Transverse colon (tissue), 4 donors: ENCODE measurements at regions of chr2 and their contacts with region 1.

Region 1: DNA sequence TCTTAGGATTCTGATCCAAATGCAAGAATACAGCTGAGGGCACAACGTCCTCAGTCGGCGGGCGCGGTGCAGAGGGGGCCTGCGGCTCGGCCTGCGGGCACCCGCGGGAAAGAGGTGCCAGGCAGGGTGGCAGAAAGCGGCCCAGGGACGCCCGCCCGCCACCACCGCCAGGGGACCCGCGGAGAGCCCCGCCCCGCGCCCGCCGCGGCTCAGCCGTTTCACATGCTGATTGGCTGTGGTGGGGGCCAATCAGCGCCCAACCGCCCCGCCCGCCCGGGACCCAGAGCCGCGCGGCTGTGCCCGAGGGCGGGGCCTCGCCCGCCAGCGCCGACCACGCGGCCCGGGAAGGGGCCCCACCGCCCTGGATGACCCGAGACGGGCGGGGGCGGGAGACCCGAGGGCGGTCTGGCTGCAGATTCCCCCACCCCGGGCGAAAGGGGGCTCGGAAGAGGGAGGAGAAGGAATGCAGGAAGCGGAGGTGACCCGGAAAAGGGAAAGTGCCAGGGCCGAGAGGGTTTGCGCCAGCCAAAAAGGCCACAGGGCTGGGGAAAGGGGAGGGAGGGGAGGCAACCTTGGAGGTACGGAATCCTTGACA is 8.0 kb downstream of the IRS1 start:
- DNase-seq: peak; percentile 93
- H3K4me3 ChIP-seq: peak overlapping the region; percentile 52 to 78 (median 70)
- H3K27ac ChIP-seq: peak overlapping the region; percentile 93 to 96 (median 94)
- H3K4me1 ChIP-seq: peaks cover 0 to 61% (median 23%) of the 10 kb centered on the region in 4 donors
- H3K27me3 ChIP-seq: no peaks in the 10 kb centered on the region
- CTCF ChIP-seq: peak; percentile 55 to 88 (median 58)
- EP300 ChIP-seq: no peak
- POLR2A ChIP-seq: peak; percentile 53

Region 2: DNA sequence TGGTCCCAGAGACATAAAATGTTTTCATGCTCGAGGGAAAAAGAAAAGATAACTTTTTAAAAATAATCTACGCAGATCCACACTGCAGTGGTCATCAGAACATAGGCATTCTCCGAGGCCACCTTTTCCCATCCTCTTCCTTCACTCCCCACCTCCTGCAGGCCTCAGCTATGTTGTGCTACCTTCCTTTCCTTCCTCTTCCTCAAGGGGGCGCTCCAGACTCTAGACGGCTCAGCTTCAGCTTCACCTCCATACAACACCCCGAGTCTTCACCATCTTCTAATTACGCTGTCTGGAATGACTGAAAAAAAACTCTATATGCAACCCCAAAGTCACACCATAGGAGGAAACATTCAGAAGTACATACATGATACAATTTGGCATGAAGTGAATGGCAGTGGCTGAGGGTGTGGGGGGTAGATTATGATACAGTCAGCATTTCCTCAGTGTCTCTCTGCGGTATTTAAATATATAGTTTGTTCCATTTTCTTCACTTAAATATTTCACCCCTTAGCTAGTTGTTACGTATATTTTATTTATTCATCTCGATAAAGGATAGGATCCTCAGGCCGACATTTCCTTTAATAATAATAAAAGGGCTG is 575.6 kb before region 1 on chr2:
- in situ Hi-C with region 1: no loop called
- intact Hi-C with region 1: loop called (anchors 10 kb)
- DNase-seq: peak; percentile 75
- H3K4me3 ChIP-seq: no peak overlapping the region
- H3K27ac ChIP-seq: no peak overlapping the region
- H3K4me1 ChIP-seq: peaks cover 0 to 8% (median 3%) of the 10 kb centered on the region in 4 donors
- H3K27me3 ChIP-seq: no peaks in the 10 kb centered on the region
- CTCF ChIP-seq: peak; percentile 63 to 69 (median 66)
- EP300 ChIP-seq: no peak
- POLR2A ChIP-seq: no peak

Region 3: GRCh38 chr2:226649871-226650660 is 141.5 kb before region 1 on chr2:
- in situ Hi-C with region 1: loop called in 1 of 4 experiments (anchors 25 kb)
- intact Hi-C with region 1: no loop called
- DNase-seq: peak; percentile 82
- H3K4me3 ChIP-seq: no peak overlapping the region
- H3K27ac ChIP-seq: peak overlapping the region; percentile 71 to 84 (median 79)
- H3K4me1 ChIP-seq: peaks cover 12 to 27% (median 17%) of the 10 kb centered on the region in 4 donors
- H3K27me3 ChIP-seq: no peaks in the 10 kb centered on the region
- CTCF ChIP-seq: no peak
- EP300 ChIP-seq: peak; percentile 69
- POLR2A ChIP-seq: no peak

Region 4: DNA sequence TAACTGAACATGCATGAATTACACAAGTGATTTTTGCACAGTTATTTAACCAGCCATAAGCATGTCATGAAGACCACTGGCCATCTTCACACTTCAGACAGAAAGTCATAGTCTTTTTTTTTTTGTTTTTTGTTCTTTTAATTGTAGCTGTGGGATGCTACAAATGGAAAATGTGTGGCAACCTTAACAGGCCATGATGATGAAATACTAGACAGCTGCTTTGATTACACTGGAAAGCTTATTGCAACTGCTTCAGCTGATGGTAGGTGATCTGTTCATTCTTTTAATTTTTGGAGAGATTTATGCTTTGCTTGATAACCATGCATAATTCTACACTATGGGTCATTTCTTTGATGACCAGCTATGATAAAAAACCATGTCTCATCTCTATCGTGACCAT is 1115.4 kb after region 1 on chr2:
- in situ Hi-C with region 1: no loop called
- intact Hi-C with region 1: no loop called
- DNase-seq: no peak
- H3K4me3 ChIP-seq: no peak overlapping the region
- H3K27ac ChIP-seq: no peak overlapping the region
- H3K4me1 ChIP-seq: no peaks in the 10 kb centered on the region
- H3K27me3 ChIP-seq: no peaks in the 10 kb centered on the region
- CTCF ChIP-seq: no peak
- EP300 ChIP-seq: no peak
- POLR2A ChIP-seq: no peak